ENCODE measurements at regions of chr19 and their contacts with region 1.

Region 1: DNA sequence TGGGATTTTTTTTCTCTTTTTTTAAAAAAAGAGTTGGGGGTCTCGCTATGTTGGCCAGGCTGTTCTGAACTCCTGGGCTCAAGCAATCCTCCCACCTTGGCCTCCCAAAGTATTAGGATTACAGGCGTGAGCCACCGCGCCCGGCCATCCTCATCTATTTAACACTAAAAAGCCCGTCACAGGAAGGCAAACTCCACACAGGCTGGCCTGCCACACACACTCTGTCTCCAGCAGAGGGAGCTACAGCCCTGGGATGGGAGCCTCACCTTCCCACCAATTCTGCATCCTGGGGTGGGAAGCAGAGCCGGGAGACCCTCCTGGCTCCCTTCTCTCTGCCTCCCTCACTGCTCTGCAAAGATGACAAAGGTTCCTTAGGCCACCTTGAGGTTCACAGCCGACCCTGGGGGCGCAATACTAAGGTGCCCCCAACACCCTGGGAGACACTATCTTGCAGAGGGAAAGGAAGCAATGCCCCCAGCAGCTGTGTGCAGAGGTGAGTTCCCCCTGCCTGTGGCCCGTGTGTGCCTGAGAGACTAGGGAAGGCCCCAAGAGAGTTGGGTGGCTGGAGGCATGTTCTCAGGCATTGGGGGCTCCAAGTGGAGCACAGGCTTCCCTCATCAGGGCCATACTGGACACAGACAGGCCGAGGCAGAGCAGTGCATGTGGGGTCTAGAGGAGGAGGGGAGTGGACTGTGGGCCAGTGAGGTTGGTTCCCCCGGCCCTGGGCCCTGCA is 27.4 kb upstream of the TIMM44 start:
- DNase-seq: peak; percentile 85
- ATAC-seq: peak; percentile 81
- H3K4me3 Mint-ChIP-seq: no peak overlapping the region
- H3K27ac Mint-ChIP-seq: peak overlapping the region; percentile 80
- H3K4me1 Mint-ChIP-seq: peaks cover 24% of the 10 kb centered on the region
- H3K27me3 Mint-ChIP-seq: no peaks in the 10 kb centered on the region
- CTCF ChIP-seq: peak; percentile 76

Region 2: DNA sequence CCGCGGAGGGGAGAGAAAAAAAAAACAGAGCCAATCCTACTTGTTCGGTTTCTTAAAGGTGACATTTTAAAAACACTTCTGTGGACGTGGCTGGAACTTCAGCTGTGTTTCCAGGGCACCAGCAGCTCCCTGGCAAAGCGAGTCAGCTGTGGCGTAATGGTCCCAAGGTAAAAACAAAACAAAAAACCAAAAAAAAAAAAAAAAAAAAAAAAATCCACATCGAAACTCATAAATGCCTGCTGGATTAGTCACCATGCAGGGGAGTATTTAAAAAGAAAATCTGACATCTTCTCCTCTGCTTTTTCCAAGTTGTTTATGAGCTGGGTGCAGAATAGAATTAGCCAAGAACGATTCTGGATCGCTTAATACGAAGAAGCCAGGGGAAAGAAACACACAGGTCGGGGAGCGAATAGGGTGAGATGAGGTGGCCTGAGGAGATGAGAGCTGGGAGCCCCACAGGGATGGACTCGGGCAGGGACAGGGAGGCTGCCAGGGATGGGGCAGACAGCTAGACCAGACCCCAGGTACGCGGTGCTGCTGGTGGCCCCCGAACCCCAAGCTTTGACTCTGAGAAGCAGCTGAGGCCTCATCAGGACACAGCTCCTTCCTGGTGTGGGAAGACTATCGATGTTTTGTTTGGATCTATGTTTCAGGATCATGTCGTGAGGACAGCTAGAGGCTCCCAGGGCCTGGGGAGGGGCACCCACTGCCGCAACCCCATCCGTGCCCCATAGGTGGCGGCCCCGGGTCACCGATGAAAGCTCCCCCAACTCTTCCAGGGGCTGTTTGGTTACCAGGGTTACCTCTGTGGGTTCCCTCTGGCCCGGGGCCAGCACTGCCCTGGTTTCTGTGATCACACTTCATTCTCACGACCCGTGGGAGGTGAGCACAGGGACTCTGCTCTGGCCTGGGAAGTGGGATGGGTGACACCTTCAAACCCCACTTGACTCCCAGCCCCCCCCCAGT is 41.9 kb before region 1 on chr19:
- CTCF ChIA-PET with region 1: interaction called, 13 read pairs
- POLR2A ChIA-PET with region 1: no interaction called
- DNase-seq: peak; percentile 84
- ATAC-seq: peak; percentile 63
- H3K4me3 Mint-ChIP-seq: no peak overlapping the region
- H3K27ac Mint-ChIP-seq: peak overlapping the region; percentile 70; the same call in 1 of the 2 replicates
- H3K4me1 Mint-ChIP-seq: peaks cover 4% of the 10 kb centered on the region; the same call in 1 of the 2 replicates
- H3K27me3 Mint-ChIP-seq: no peaks in the 10 kb centered on the region
- CTCF ChIP-seq: peak; percentile 71

Region 3: GRCh38 chr19:7953060-7953459 is 17.8 kb before region 1 on chr19:
- CTCF ChIA-PET with region 1: interaction called, 12 read pairs
- POLR2A ChIA-PET with region 1: interaction called, 5 read pairs
- DNase-seq: no peak
- ATAC-seq: peak; percentile 16; the same call in 1 of the 2 replicates
- H3K4me3 Mint-ChIP-seq: no peak overlapping the region
- H3K27ac Mint-ChIP-seq: no peak overlapping the region
- H3K4me1 Mint-ChIP-seq: peaks cover 9% of the 10 kb centered on the region
- H3K27me3 Mint-ChIP-seq: no peaks in the 10 kb centered on the region
- CTCF ChIP-seq: no peak

Region 4: GRCh38 chr19:7959211-7959610 is 11.7 kb before region 1 on chr19:
- CTCF ChIA-PET with region 1: interaction called, 16 read pairs
- POLR2A ChIA-PET with region 1: no interaction called
- DNase-seq: no peak
- ATAC-seq: no peak
- H3K4me3 Mint-ChIP-seq: no peak overlapping the region
- H3K27ac Mint-ChIP-seq: no peak overlapping the region
- H3K4me1 Mint-ChIP-seq: peaks cover 5% of the 10 kb centered on the region; the same call in 1 of the 2 replicates
- H3K27me3 Mint-ChIP-seq: no peaks in the 10 kb centered on the region
- CTCF ChIP-seq: no peak

Region 5: GRCh38 chr19:7997809-7998480 is 27.1 kb after region 1 on chr19:
- CTCF ChIA-PET with region 1: interaction called, 64 read pairs
- POLR2A ChIA-PET with region 1: no interaction called
- DNase-seq: no peak
- ATAC-seq: no peak
- H3K4me3 Mint-ChIP-seq: no peak overlapping the region
- H3K27ac Mint-ChIP-seq: 0 out of 2 replicates have a peak overlapping the region, but pooled peaks have one; percentile 67
- H3K4me1 Mint-ChIP-seq: peaks cover 59% of the 10 kb centered on the region
- H3K27me3 Mint-ChIP-seq: no peaks in the 10 kb centered on the region
- CTCF ChIP-seq: no peak

Region 6: GRCh38 chr19:8054169-8054568 is 83.3 kb after region 1 on chr19:
- CTCF ChIA-PET with region 1: no interaction called
- POLR2A ChIA-PET with region 1: no interaction called
- DNase-seq: no peak
- ATAC-seq: no peak
- H3K4me3 Mint-ChIP-seq: no peak overlapping the region
- H3K27ac Mint-ChIP-seq: no peak overlapping the region
- H3K4me1 Mint-ChIP-seq: peaks cover 17% of the 10 kb centered on the region
- H3K27me3 Mint-ChIP-seq: peaks cover 23% of the 10 kb centered on the region
- CTCF ChIP-seq: no peak

Region 7: GRCh38 chr19:8069096-8069973 is 98.5 kb after region 1 on chr19:
- CTCF ChIA-PET with region 1: interaction called, 21 read pairs
- POLR2A ChIA-PET with region 1: interaction called, 3 read pairs
- DNase-seq: peak; percentile 73
- ATAC-seq: peak; percentile 51
- H3K4me3 Mint-ChIP-seq: no peak overlapping the region
- H3K27ac Mint-ChIP-seq: no peak overlapping the region
- H3K4me1 Mint-ChIP-seq: no peaks in the 10 kb centered on the region
- H3K27me3 Mint-ChIP-seq: no peaks in the 10 kb centered on the region; the same call in 1 of the 2 replicates
- CTCF ChIP-seq: peak; percentile 94

Region 8: GRCh38 chr19:8147582-8147978 is 176.7 kb after region 1 on chr19:
- CTCF ChIA-PET with region 1: no interaction called
- POLR2A ChIA-PET with region 1: no interaction called
- DNase-seq: no peak
- ATAC-seq: no peak
- H3K4me3 Mint-ChIP-seq: peak overlapping the region; percentile 83
- H3K27ac Mint-ChIP-seq: peak overlapping the region; percentile 70; the same call in 1 of the 2 replicates
- H3K4me1 Mint-ChIP-seq: peaks cover 46% of the 10 kb centered on the region
- H3K27me3 Mint-ChIP-seq: no peaks in the 10 kb centered on the region; the same call in 1 of the 2 replicates
- CTCF ChIP-seq: no peak